Activated naive CD4-positive, alpha-beta T cell treated with anti-CD3 and anti-CD28 coated beads, Interleukin-2, amount 10 ng/mL, durations not matched to agents 7 days and 5 days (primary cell): ENCODE measurements at regions of chr14 and their contacts with region 1.

Region 1: DNA sequence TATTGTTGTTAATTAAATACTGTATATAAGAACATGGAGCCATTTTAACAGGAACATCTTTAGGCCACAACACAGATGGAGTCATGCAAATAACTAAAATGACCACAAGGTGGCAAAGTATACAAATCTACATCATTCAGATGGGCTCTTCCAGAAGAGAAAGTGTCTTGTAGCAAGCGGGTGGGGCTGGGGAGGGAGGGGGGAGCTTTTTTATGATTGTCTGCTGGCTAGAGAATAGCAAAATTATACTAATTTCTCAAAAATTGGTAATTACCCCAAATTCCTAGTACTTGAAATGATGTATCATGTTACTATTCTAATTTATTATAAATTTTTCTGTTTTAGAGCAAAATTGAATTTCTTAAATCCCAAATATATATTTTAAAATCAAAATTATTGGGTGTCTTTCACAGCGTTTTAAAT is 378.7 kb downstream of the PRKD1 start:
- DNase-seq: no peak
- H3K4me3 Mint-ChIP-seq: no peak overlapping the region
- H3K27ac Mint-ChIP-seq: no peak overlapping the region
- H3K4me1 Mint-ChIP-seq: no peaks in the 10 kb centered on the region
- H3K27me3 Mint-ChIP-seq: no peaks in the 10 kb centered on the region

Region 2: DNA sequence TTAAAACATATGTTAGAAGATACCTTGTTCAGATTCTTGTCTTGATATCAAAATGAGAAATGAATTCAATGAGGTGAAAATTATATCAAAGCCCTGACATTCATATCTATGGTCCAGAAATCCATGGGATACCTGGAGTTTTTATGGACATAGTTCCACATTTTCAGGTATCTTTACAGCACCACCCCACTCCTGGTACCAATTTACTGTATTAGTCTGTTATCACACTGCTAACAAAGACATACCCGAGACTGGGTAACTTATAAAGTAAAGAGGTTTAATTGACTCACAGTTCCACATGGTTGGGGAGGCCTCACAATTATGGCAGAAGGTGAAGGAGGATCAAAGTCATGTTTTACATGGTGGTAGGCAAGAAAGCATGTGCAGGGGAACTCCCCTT is 17.2 kb after region 1 on chr14:
- CTCF ChIA-PET with region 1: no interaction called
- DNase-seq: no peak
- H3K4me3 Mint-ChIP-seq: no peak overlapping the region
- H3K27ac Mint-ChIP-seq: no peak overlapping the region
- H3K4me1 Mint-ChIP-seq: no peaks in the 10 kb centered on the region
- H3K27me3 Mint-ChIP-seq: no peaks in the 10 kb centered on the region

Region 3: GRCh38 chr14:30214461-30215090 is 665.6 kb after region 1 on chr14:
- CTCF ChIA-PET with region 1: interaction called, 12 read pairs
- DNase-seq: no peak
- H3K4me3 Mint-ChIP-seq: no peak overlapping the region
- H3K27ac Mint-ChIP-seq: no peak overlapping the region
- H3K4me1 Mint-ChIP-seq: no peaks in the 10 kb centered on the region
- H3K27me3 Mint-ChIP-seq: no peaks in the 10 kb centered on the region